ENCODE measurements at regions of chr3 and their contacts with region 1.

Region 1: GRCh38 chr3:170811928-170812591 is 57.9 kb downstream of the RPL22L1 start:
- DNase-seq: peak; percentile 32 to 84 (median 54)
- H3K4me3 ChIP-seq: no peak overlapping the region
- H3K27ac ChIP-seq: peak overlapping the region in 38 of 59 donors; percentile 1 to 71 (median 48)
- H3K27me3 ChIP-seq: no peaks in the 10 kb centered on the region
- CTCF ChIP-seq: peak; percentile 85 to 98 (median 94)

Region 2: GRCh38 chr3:170180908-170181879 is 630.9 kb before region 1 on chr3 and contains the start of gene PHC3:
- intact Hi-C with region 1: loop called in 1 of 2 experiments (anchors 10 kb)
- DNase-seq: peak; percentile 87 to 96 (median 92)
- H3K4me3 ChIP-seq: peak within 1 kb of the TSS; percentile 51 to 99 (median 94)
- H3K27ac ChIP-seq: peak within 1 kb of the TSS; percentile 54 to 99 (median 95)
- H3K27me3 ChIP-seq: no peaks in the 10 kb centered on the region
- CTCF ChIP-seq: peak in 46 of 56 donors; percentile 10 to 65 (median 38)
- total RNA-seq, gene PHC3: 76.0 to 170 (median 110) TPM

Region 3: DNA sequence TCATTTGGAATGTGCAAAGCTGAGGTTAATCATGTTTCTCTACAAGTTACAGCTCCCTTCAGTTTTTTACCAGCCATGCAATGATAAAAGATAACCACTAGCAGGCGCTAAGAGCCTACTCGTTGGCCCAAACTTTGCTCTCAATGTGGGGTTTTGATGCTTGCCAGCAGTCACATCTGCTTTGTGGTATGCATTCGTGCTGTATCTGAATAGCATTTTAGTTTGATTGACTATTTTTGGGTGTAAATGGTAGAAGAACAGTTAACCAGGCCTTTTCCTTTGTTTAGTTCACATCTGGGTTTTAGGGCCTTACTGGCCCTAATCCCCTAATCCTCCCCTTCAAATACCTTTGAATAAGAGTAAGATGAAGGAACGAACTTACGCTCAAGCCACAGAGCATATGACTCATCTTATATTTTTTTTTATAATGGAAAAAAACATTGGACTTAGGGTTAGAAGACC is 397.8 kb before region 1 on chr3:
- intact Hi-C with region 1: loop called (anchors 1 to 5 kb)
- DNase-seq: peak in 2 of 10 donors; percentile 31 to 63
- H3K4me3 ChIP-seq: no peak overlapping the region
- H3K27ac ChIP-seq: peak overlapping the region in 38 of 59 donors; percentile 0 to 73 (median 48)
- H3K27me3 ChIP-seq: peaks cover 0 to 21% (median 3%) of the 10 kb centered on the region in 45 donors
- CTCF ChIP-seq: peak in 55 of 56 donors; percentile 85 to 100 (median 96)

Region 4: GRCh38 chr3:170517242-170517945 is 294.7 kb before region 1 on chr3:
- intact Hi-C with region 1: loop called in 1 of 2 experiments (anchors 10 kb)
- DNase-seq: no peak
- H3K4me3 ChIP-seq: no peak overlapping the region
- H3K27ac ChIP-seq: no peak overlapping the region
- H3K27me3 ChIP-seq: no peaks in the 10 kb centered on the region
- CTCF ChIP-seq: no peak

Region 5: DNA sequence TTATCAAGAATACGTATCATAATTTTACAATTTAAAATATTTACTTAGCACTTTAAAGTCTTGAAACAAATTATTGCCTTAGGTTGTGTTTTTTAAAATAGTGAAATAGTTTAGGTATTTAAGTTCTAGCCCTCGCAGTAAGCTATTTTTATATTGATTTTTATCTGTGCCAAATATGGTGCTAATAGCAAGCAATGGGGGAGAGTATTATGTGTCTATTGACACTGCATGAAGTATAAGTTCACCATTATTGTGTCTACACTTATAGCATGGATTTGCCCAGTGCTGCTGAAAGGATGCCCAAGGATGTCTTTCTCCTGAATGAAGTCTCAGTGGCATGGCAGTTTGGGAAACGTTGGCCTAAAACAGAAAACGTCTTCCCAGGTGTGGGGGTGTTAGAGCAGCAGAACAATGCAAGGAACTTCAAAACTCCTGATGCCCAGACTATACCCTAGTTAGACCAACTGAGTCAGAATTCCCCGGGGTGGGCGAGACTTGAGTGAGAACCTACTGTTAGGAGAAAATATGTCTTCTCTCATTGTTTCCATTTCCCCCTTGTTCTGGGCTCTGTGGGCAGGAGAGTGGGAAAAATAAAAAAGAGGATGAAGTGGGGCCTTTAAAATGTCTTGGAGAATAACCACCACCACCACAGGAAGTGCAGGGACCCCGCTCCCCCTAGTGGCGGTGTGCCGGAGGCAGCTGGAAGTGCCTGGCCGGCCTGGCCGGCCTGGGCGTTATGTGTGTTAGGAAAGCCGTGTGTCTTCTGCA is 122.0 kb before region 1 on chr3:
- intact Hi-C with region 1: loop called in 1 of 2 experiments (anchors 5 kb)
- DNase-seq: peak; percentile 65 to 83 (median 74)
- H3K4me3 ChIP-seq: no peak overlapping the region
- H3K27ac ChIP-seq: peak overlapping the region in 17 of 59 donors; percentile 4 to 64 (median 29)
- H3K27me3 ChIP-seq: no peaks in the 10 kb centered on the region
- CTCF ChIP-seq: peak; percentile 49 to 92 (median 79)

Region 6: GRCh38 chr3:171101982-171102641 is 290.1 kb after region 1 on chr3:
- intact Hi-C with region 1: no loop called
- DNase-seq: no peak
- H3K4me3 ChIP-seq: no peak overlapping the region
- H3K27ac ChIP-seq: no peak overlapping the region
- H3K27me3 ChIP-seq: no peaks in the 10 kb centered on the region
- CTCF ChIP-seq: no peak

Region 7: DNA sequence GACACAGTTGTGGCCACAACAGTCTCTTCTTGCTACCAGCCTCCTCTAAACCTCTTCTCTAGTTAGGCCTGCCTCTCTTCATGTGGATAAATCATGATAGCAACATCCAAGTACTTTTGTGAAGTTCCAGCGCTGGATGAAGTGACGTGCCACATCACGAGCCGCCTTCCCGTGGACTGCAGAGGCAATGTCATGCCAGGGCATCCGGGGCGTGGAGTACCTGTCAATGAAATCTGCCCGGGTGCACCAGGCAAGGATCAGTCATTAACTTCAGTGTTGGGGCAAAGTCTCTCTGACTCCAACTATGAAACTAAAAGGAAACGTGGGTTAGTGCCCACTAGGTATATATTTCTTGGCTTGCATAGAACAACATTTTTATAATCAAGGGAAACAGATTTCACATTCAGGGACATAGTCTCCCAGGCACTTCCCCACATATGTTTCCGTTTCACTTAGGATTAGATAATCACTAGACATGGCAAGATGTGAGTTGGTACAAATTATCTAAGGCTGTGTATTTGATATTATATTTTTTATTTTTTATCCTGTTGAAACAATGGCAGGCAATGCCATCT is 864.6 kb after region 1 on chr3:
- intact Hi-C with region 1: no loop called
- DNase-seq: no peak
- H3K4me3 ChIP-seq: no peak overlapping the region
- H3K27ac ChIP-seq: peak overlapping the region in 1 of 59 donors; percentile 12
- H3K27me3 ChIP-seq: no peaks in the 10 kb centered on the region
- CTCF ChIP-seq: no peak